Activated T-helper 1 cell treated with anti-CD3 and anti-CD28 coated beads, Interleukin-12 subunit alpha, Interleukin-12 subunit beta, Interleukin-2, Interleukin-4 antibody, amounts not matched to agents 30 ng/mL and 10 ng/mL and 1 ng/mL, durations not matched to agents 14 hours and 24 hours and 36 hours (primary cell): ENCODE measurements at regions of chr2 and their contacts with region 1.

Region 1: GRCh38 chr2:8408560-8409460 is 273.0 kb upstream of the ID2 start:
- DNase-seq: peak; percentile 49
- H3K4me3 Mint-ChIP-seq: peak overlapping the region; percentile 1
- H3K27ac Mint-ChIP-seq: peak overlapping the region; percentile 80
- H3K4me1 Mint-ChIP-seq: peaks cover 19% of the 10 kb centered on the region
- H3K27me3 Mint-ChIP-seq: peaks cover 15% of the 10 kb centered on the region

Region 2: DNA sequence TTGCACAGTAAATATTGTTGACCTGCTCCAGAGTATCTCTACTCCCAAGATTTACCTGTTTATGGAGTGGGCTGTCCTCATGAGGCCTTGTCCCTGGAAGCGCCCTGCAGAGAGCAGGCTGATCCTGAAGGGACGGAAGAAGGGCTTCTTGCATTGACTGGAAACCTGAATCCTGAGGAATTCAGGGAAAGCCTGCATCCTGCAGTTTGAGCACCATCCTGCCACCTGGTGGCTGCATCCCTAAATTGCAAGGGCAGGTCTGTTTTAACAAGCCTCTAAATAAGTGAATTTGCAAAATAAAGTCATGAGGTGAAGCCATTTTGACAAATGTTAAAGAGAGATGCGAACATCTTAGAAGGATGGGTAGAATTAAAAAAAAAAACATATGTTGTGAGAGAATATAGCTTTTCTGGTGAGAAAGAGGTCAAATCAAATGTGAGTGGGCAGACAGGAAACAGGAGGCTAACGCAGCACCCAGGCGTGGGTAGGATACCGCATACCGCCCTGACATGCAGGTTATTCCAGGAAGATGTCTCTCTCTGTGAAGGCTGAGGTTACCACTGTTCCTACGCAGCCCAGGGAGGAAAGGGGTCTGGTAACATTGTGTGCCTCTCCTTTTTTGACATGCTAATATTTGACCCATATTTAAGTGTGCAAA is 736.7 kb before region 1 on chr2:
- intact Hi-C with region 1: loop called (anchors 5 kb)
- DNase-seq: peak; percentile 43
- H3K4me3 Mint-ChIP-seq: peak overlapping the region; percentile 71
- H3K27ac Mint-ChIP-seq: peak overlapping the region; percentile 93
- H3K4me1 Mint-ChIP-seq: peaks cover 79% of the 10 kb centered on the region
- H3K27me3 Mint-ChIP-seq: no peaks in the 10 kb centered on the region

Region 3: GRCh38 chr2:7845332-7845731 is 563.5 kb before region 1 on chr2:
- intact Hi-C with region 1: loop called (anchors 1 kb)
- DNase-seq: no peak
- H3K4me3 Mint-ChIP-seq: no peak overlapping the region
- H3K27ac Mint-ChIP-seq: no peak overlapping the region
- H3K4me1 Mint-ChIP-seq: peaks cover 57% of the 10 kb centered on the region
- H3K27me3 Mint-ChIP-seq: no peaks in the 10 kb centered on the region

Region 4: GRCh38 chr2:8152392-8153257 is 256.2 kb before region 1 on chr2:
- intact Hi-C with region 1: loop called (anchors 2 kb)
- DNase-seq: no peak
- H3K4me3 Mint-ChIP-seq: no peak overlapping the region
- H3K27ac Mint-ChIP-seq: peak overlapping the region; percentile 62
- H3K4me1 Mint-ChIP-seq: peaks cover 38% of the 10 kb centered on the region
- H3K27me3 Mint-ChIP-seq: no peaks in the 10 kb centered on the region

Region 5: GRCh38 chr2:8432706-8433336 is 24.0 kb after region 1 on chr2:
- intact Hi-C with region 1: loop called (anchors 1 kb)
- DNase-seq: no peak
- H3K4me3 Mint-ChIP-seq: peak overlapping the region; percentile 49
- H3K27ac Mint-ChIP-seq: peak overlapping the region; percentile 30
- H3K4me1 Mint-ChIP-seq: peaks cover 13% of the 10 kb centered on the region
- H3K27me3 Mint-ChIP-seq: no peaks in the 10 kb centered on the region

Region 6: DNA sequence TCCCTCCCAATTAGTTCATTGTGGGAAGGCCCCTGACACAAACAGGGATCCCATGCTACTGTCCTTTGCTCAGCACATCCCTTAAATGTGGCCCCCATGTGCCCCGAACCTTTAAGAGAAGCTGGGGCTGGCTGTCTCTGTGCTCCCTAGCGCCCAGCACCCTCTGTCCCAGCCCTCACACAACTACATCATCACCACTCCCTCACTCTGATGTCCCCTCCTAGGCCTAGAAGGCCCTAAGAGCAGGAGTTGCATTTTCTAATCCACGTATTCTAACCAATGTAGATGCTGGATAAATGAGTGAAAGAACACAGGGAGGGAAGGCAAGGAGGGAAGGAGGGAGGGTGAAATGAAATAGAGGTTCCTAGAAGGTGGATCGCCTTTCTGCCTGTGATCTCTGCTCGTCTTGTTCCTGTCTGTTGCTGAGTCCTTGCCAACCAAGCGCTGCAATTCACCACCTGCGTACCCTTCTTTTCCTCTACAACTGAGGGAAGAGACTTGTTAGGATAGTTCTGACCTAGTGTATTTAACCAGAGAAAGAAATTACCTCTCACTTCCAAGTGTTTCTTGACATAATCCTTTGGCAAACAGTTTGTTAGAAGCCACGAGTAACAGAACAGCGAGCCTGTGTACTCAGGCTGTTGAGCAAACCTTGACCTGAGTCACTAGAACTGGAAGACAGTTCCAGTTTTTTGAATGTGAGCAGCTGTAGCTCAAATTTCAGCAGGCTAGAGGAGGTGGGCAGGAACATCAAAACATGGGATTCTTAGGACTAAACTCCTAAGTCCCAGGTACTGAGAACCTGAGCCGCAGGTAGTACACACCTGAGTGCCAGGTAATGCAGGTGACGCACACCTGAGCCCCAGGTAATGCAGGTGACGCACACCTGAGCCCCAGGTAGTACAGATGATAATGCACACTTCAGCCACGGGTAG is 91.6 kb after region 1 on chr2:
- intact Hi-C with region 1: no loop called
- DNase-seq: no peak
- H3K4me3 Mint-ChIP-seq: no peak overlapping the region
- H3K27ac Mint-ChIP-seq: no peak overlapping the region
- H3K4me1 Mint-ChIP-seq: peaks cover 32% of the 10 kb centered on the region
- H3K27me3 Mint-ChIP-seq: peaks cover 2% of the 10 kb centered on the region

Region 7: DNA sequence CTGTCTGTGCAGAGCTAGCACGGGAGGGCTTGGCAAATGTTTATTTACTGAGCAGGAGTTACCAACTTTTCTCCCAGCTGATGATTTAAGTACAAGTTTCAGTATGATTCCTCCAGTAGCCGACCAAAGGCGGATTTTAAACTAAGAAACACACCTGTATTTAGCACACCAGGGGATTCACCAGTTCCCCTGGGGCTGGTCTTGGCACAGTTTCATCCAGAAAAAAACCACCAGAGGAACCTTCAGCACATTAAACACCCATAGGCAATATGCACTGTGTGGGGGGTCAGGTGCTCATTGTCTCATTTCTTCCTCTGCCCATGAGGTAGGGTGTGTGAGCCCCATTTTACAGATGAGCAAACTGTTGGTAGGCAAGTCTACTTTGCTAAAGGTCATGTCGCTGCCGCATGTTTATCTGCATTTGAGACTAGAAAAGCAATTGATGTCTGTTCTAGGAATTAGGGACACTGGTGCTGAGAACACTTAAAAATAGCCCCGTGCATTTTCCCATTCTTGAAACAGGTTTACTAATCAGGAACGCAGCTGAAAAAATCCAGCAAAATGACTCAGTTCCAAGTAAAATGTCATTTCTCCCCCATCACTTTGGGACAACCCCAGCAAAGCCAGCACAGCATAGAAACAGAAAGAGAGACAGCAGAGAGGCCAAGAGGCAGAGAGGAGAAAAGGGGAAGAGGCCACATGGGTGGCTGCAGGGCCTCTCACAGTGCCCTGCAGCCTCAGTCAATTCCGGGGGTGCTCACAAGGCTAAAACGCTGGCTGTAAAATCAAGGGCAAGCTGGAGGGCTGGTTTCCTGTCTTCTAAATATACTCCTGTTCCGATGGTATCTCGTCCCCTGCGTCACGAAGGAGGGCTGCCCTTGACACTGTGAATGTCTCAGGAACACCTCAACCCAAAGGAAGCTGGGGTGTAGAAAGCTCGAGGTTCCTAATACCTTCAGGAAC is 106.3 kb after region 1 on chr2:
- intact Hi-C with region 1: loop called (anchors 1 kb)
- DNase-seq: peak; percentile 58
- H3K4me3 Mint-ChIP-seq: peak overlapping the region; percentile 35
- H3K27ac Mint-ChIP-seq: peak overlapping the region; percentile 95
- H3K4me1 Mint-ChIP-seq: peaks cover 68% of the 10 kb centered on the region
- H3K27me3 Mint-ChIP-seq: no peaks in the 10 kb centered on the region

Region 8: DNA sequence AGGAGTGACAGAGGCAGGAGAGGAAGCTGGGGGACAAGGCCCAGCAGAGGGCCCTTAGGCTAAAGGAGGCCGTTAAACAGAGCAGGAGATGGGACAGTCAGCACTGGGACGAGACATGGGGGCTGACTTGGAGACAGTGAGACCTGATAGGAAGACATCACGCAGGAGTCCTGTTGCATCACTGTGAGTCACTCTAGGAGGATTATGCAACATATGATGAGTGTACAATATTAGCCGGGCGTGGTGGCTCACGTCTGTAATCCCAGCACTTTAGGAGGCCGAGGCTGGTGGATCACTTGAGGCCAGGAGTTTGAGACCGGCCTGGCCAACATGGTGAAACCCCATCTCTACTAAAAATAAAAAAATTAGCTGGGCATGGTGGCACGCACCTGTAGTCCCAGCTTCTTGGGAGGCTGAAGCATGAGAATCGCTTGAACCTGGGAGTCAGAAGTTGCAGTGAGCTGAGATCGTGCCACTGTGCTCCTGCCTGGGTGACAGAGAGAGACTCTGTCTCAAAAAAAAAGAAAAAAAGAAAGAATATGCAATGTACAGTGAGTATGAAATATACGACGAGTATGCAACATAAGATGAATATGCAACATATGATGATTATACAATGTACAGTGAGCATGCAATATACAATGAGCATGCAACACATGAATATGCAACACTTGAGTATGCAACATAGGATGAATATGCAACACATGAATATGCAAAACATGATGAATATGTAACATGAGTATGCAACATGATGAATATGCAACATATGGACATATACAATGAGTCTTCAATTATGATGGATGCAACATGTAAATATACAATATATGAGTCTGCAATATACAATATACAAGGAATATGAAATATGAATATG is 189.7 kb after region 1 on chr2:
- intact Hi-C with region 1: no loop called
- DNase-seq: no peak
- H3K4me3 Mint-ChIP-seq: no peak overlapping the region
- H3K27ac Mint-ChIP-seq: no peak overlapping the region
- H3K4me1 Mint-ChIP-seq: peaks cover 7% of the 10 kb centered on the region
- H3K27me3 Mint-ChIP-seq: peaks cover 2% of the 10 kb centered on the region